Activated T-helper 1 cell treated with anti-CD3 and anti-CD28 coated beads, Interleukin-12 subunit alpha, Interleukin-12 subunit beta, Interleukin-2, Interleukin-4 antibody, amounts not matched to agents 30 ng/mL and 10 ng/mL and 1 ng/mL, durations not matched to agents 14 hours and 24 hours and 36 hours (primary cell): ENCODE measurements at regions of chr14 and their contacts with region 1.

Region 1: DNA sequence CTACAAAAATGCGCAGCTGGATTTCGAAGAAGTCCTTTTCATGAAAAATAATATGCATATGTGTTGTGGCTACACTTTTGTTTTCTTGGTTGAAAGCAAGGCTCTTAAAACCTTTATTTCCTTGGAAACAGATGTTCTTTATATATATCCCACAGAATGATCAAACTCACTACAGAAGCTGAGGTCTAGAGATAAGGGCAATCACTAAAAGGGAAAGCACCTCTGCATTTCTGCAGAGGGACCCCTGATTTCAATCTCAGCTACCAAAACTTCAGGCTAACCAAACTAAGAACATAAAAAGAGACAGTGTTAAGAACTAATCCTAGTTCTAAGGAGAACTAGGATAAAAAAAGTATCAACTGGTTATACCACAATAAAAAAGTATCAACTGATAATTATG is 65.4 kb upstream of the CDKL1 start:
- DNase-seq: no peak
- H3K4me3 Mint-ChIP-seq: no peak overlapping the region
- H3K27ac Mint-ChIP-seq: no peak overlapping the region
- H3K4me1 Mint-ChIP-seq: no peaks in the 10 kb centered on the region
- H3K27me3 Mint-ChIP-seq: no peaks in the 10 kb centered on the region

Region 2: DNA sequence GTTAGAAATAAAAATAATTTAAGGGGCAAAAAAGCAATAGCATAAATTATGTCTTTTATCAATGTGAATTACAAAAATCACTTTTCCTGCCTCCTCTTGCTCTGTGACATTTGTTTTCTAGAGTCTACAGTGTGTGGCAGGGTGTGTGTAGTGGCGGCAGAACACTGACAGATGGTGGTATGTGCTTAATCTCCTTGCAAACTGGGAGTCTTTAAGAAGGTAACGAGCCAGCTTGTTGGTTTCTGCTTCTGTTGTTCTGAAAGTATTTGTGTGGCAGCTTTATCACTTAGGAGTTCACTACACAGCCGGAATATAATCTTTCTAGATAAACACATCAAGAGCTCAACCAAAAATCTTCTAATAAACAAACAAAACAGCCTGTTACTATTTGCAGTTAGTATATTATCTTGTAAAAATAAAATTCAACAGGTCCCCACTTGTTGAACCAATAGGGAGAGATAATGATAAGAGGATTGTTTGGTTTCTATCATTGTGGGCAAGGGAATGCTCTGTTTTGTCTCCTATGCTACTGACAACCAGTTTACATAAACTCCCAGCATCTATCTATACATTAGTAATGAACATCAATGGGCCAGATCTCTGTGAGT is 78.4 kb before region 1 on chr14:
- intact Hi-C with region 1: no loop called
- DNase-seq: no peak
- H3K4me3 Mint-ChIP-seq: no peak overlapping the region
- H3K27ac Mint-ChIP-seq: no peak overlapping the region
- H3K4me1 Mint-ChIP-seq: no peaks in the 10 kb centered on the region
- H3K27me3 Mint-ChIP-seq: peaks cover 3% of the 10 kb centered on the region

Region 3: GRCh38 chr14:50501642-50502041 is 39.5 kb after region 1 on chr14:
- intact Hi-C with region 1: loop called (anchors 5 kb)
- DNase-seq: no peak
- H3K4me3 Mint-ChIP-seq: no peak overlapping the region
- H3K27ac Mint-ChIP-seq: no peak overlapping the region
- H3K4me1 Mint-ChIP-seq: peaks cover 5% of the 10 kb centered on the region
- H3K27me3 Mint-ChIP-seq: no peaks in the 10 kb centered on the region